ENCODE measurements at regions of chr19 and their contacts with region 1.

Region 1: GRCh38 chr19:21505459-21506451 is at the start of gene ZNF429:
- DNase-seq: peak; percentile 90 to 94
- ATAC-seq: peak; percentile 99 to 100
- H3K4me3 ChIP-seq: peak within 1 kb of the TSS; percentile 71 to 87 (median 78)
- H3K27ac ChIP-seq: peak within 1 kb of the TSS; percentile 88 to 94 (median 92)
- H3K4me1 ChIP-seq: peaks cover 14 to 18% of the 10 kb centered on the region in 2 donors
- H3K27me3 ChIP-seq: no peaks in the 10 kb centered on the region
- CTCF ChIP-seq: no peak
- POLR2A ChIP-seq: peak; percentile 78 to 85
- total RNA-seq, gene ZNF429: 3.4 to 11.1 (median 7.4) TPM

Region 2: DNA sequence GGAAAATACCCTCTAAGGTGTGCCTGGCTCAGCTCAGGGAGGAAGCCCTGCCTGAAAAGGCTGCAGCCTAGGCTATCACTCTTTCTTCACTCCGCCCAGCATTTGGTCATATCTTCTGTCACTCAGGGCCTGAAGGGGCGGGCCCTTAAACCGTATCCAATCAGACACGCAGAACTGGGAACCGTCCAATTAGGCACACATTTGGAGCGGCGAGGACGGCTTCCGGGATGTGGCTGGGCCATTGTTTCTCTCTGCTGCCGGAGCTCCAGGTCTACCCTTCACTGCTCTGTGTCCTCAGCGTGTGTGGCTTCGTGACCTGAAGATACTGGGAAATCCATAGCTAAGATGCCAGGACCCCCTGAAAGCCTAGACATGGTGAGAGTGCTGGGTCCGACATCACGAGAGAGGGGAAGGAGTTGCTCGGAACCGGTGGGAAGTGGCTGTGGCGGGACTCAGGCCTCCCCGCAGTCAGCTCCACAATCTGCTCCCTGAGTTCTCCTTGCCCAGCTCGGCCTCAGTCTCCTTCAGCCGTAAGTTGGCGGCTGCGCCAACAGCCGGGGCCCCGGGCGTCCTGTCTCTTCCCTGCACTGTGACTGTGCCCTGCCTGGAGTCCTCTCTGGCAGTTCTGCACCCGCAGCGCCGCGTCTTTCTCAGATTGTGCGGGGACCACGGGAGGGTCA is 108.7 kb before region 1 on chr19 and contains the start of gene ZNF493:
- in situ Hi-C with region 1: no loop called
- intact Hi-C with region 1: loop called (anchors 1 kb)
- DNase-seq: peak; percentile 89 to 94
- ATAC-seq: peak; percentile 100
- H3K4me3 ChIP-seq: peak within 1 kb of the TSS; percentile 66 to 87 (median 83)
- H3K27ac ChIP-seq: peak within 1 kb of the TSS; percentile 82 to 88 (median 84)
- H3K4me1 ChIP-seq: peaks cover 13 to 20% of the 10 kb centered on the region in 2 donors
- H3K27me3 ChIP-seq: no peaks in the 10 kb centered on the region
- CTCF ChIP-seq: no peak
- POLR2A ChIP-seq: peak; percentile 53 to 79
- total RNA-seq, gene ZNF493: 2.2 to 6.5 (median 3.1) TPM